Astrocyte of the cerebellum (primary cell): ENCODE measurements at regions of chr13 and their contacts with region 1.

Region 1: GRCh38 chr13:111114362-111115060 is 599 bp upstream of the ARHGEF7 start:
- DNase-seq: no peak
- H3K4me3 ChIP-seq: peak overlapping the region; percentile 46
- CTCF ChIP-seq: no peak

Region 2: GRCh38 chr13:111158136-111158805 is 43.8 kb after region 1 on chr13:
- in situ Hi-C with region 1: loop called (anchors 5 kb)
- DNase-seq: no peak
- H3K4me3 ChIP-seq: no peak overlapping the region
- CTCF ChIP-seq: no peak